Activated CD8-positive, alpha-beta T cell treated with anti-CD3 and anti-CD28 coated beads, Interleukin-2, amount 10 ng/mL, durations not matched to agents 7 days and 5 days (primary cell): ENCODE measurements at regions of chr12 and their contacts with region 1.

Region 1: DNA sequence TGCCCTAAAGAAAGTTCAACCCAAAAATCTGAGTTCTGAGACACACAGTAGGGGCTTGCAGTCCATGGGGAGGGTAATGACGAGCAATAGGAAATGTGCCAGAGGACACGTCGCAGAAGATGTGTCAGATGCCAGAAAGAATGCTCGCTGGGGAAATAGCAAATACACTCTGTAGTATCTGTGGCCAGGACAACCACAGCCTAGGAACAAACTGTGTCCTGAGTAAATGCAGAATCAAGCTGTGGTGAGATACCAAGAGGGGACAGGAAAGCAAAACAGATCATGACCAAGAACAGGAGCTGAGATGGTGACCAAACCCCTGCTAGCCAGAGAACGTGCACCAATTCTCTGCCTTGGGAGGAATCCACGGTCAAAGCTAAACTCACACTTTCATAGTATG is 9.1 kb downstream of the CRACR2A start:
- DNase-seq: peak; percentile 57
- ATAC-seq: peak; percentile 58
- H3K4me3 Mint-ChIP-seq: no peak overlapping the region
- H3K27ac Mint-ChIP-seq: peak overlapping the region; percentile 51
- H3K4me1 Mint-ChIP-seq: peaks cover 53% of the 10 kb centered on the region
- H3K27me3 Mint-ChIP-seq: no peaks in the 10 kb centered on the region

Region 2: DNA sequence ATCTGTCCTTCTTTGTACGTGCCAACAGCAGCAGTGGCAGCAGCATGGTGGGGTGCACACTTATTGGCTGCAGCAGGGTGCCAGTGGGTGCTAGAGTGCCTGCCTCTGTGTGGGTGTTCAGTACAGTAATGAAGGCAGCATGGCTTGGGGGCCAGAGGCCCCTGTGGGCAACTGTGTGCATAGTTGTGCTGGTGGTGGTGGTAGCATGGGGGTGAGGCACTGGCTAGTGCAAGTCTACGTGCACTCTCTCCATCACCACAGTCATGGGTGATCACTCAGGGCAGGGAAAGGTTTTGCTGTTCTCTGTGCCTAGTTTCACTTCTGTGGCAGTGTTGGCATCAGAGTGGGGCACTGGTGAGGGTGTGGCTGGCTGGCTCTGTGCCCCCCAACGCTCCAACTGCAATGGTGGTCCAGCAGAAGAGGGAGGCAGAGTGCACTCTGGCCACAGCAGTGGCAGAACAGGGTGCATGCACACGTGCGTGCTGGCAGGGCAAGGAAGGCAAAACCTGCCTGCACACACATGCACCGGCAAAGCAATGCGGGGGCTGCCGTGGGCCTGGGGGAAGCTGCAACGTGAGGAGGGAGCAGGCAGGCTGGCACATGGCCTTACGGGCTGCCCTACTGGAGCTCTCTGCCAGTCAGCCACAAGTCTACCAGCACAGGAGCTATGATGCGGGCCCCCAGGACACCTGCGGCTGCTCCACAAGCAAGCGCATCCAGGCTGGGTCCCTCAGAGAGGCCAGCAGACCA is 51.0 kb before region 1 on chr12:
- CTCF ChIA-PET with region 1: no interaction called
- POLR2A ChIA-PET with region 1: no interaction called
- DNase-seq: no peak
- ATAC-seq: no peak
- H3K4me3 Mint-ChIP-seq: no peak overlapping the region
- H3K27ac Mint-ChIP-seq: no peak overlapping the region
- H3K4me1 Mint-ChIP-seq: no peaks in the 10 kb centered on the region
- H3K27me3 Mint-ChIP-seq: no peaks in the 10 kb centered on the region

Region 3: DNA sequence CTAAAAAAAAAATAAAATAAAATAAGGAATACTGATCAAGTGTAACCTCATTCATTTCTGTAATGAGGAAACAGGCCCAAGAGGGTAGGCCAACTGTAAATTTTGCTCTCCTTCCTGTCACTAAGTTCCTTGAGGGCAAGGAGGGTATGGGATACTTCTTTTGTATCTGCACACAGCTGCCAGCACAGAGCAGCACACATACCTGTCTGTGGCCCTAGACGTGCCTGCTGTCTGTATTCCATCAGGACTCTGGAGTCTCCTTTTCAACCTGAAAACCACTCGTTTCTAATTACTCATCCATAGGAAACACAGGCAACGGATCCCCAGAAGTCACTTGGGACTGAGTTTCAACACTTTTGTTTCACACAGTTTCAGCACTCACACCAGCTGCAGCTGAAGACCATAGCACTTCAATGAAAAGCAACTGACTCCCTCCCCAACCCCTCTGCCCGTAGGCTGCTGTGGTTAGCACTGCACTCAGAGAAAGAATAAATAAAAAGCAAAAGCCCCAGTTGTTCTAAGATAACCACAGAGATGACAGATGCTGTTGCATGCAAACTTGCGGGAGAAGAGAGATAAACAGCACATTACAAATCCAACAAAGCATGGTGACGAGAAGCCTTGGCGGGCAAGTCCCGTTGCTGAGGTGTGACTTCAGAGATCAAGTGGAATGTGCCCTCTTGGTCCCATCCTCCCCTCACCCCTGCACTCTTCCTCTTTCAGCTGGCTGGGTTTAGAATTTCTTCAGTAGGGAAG is 15.7 kb before region 1 on chr12:
- CTCF ChIA-PET with region 1: interaction called, 8 read pairs
- POLR2A ChIA-PET with region 1: interaction called, 13 read pairs
- DNase-seq: peak; percentile 67
- ATAC-seq: peak; percentile 84
- H3K4me3 Mint-ChIP-seq: peak overlapping the region; percentile 36
- H3K27ac Mint-ChIP-seq: peak overlapping the region; percentile 89
- H3K4me1 Mint-ChIP-seq: peaks cover 39% of the 10 kb centered on the region
- H3K27me3 Mint-ChIP-seq: no peaks in the 10 kb centered on the region

Region 4: DNA sequence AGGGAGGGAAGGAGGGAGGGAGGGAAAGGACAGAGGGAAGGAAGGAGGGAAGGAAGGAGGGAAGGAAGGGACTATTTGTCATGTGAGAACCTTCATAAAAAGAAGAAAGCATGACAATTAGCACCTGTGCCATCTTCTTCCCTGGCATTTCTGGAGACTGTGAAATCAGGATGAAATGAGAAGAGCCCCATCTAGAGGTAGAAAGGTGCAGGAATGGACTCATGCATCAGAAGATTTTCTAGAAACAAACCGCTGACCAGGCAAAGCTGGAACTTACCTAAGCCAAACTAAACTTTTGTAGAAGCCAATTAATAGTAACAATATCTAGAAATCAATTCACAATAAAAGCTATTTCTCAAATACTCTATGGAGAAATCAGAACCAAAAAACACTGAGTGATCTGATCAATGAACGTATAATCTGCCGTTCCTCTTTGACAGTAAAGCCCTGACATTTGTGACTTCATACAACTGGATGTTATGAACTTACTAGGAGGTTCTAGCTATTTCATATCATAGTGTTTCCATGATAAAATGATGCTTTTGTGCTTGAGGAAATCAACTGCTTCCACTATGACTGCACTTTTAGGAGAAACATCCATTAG is 33.5 kb after region 1 on chr12:
- CTCF ChIA-PET with region 1: interaction called, 10 read pairs
- POLR2A ChIA-PET with region 1: no interaction called
- DNase-seq: peak; percentile 39
- ATAC-seq: no peak
- H3K4me3 Mint-ChIP-seq: no peak overlapping the region
- H3K27ac Mint-ChIP-seq: no peak overlapping the region
- H3K4me1 Mint-ChIP-seq: peaks cover 4% of the 10 kb centered on the region
- H3K27me3 Mint-ChIP-seq: no peaks in the 10 kb centered on the region